GM10248 (cell line): ENCODE measurements at regions of chr10 and their contacts with region 1.

Region 1: GRCh38 chr10:45220931-45221330 is 94.5 kb downstream of the OR13A1 start:
- DNase-seq: no peak
- CTCF ChIP-seq: no peak

Region 2: DNA sequence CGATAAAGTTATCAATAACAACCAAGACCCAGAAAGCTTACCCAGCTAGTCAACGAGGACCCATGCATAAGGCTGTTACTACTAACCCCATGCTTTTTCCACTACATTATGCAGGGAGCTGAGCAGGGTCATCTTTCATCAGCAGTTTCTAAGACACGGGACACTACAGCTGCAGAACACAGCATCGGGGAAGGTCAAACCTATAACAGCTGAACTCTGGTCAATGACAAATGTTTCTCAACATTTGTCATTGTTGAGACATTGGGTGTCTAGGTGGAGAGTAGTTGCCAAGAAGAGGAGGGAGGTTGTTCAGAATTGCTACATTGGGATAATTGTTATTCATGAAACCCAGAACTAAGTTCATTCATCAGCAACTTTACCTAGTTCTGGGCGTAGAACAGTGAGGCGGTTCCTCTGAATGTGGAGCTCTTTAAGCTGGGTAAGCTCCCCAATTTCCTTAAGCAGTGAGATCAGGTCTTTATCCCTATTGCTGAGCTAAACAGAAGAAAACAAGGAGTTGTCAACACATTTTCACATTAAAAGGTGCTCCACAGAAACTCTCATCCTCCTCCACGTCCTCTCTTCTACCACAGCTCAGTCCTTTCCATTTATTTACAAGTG is 114.6 kb before region 1 on chr10:
- CTCF ChIA-PET with region 1: no interaction called
- POLR2A ChIA-PET with region 1: no interaction called
- DNase-seq: no peak
- CTCF ChIP-seq: no peak

Region 3: DNA sequence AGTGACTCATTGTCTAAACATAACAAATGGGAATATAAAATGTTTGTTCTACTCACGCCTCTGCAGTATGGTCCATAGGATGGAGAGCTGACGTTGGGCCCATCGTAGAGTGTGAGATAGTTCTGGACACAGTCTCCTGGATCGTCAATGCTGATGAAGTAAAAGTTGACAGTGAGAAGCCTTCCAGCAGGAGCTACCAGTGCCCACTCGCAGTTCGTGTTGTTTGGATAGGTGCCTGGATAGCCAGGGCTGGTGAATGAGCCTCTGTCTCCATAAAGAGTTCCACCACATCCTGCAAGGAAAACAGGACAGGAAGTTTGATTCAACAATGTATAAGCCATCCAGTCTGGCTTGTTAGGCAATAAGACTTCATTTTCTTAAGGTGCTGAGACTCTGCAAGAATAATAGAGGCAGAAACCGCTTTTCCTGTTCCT is 14.9 kb after region 1 on chr10:
- CTCF ChIA-PET with region 1: interaction called, 26 read pairs
- POLR2A ChIA-PET with region 1: no interaction called
- DNase-seq: no peak
- CTCF ChIP-seq: no peak

Region 4: DNA sequence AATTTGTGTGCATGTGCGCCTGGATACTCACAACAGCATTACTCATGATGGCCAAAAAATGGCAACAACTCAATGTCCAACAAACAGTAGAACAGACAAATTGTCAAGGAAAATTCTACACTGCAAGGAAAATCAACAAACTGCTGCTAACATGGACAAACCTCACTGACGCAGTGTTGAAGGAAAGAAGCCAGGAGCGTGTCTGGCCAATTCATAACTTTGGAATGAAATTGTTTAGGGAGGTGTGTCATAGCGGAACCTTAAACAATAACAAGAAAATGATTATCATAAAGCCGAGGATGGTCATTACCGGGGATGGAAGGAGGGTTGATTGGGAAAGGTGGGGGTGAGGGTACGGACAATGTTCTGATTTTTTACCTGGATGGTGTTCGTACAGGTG is 182.2 kb after region 1 on chr10:
- CTCF ChIA-PET with region 1: no interaction called
- POLR2A ChIA-PET with region 1: no interaction called
- DNase-seq: no peak
- CTCF ChIP-seq: no peak